CD4-positive, alpha-beta T cell (primary cell): ENCODE measurements at regions of chr19 and their contacts with region 1.

Region 1: GRCh38 chr19:56066152-56067023 is 54.7 kb downstream of the ZNF787 start:
- DNase-seq: peak; percentile 37 to 79 (median 54)
- ATAC-seq: peak; percentile 70
- H3K4me3 ChIP-seq: peak overlapping the region; percentile 38
- H3K4me3 Mint-ChIP-seq: no peak overlapping the region
- H3K27ac ChIP-seq: no peak overlapping the region
- H3K27ac Mint-ChIP-seq: no peak overlapping the region
- H3K4me1 ChIP-seq: peaks cover 12% of the 10 kb centered on the region
- H3K4me1 Mint-ChIP-seq: peaks cover 6% of the 10 kb centered on the region
- H3K27me3 ChIP-seq: peaks cover 9 to 10% of the 10 kb centered on the region in 2 experiments
- H3K27me3 Mint-ChIP-seq: peaks cover 48% of the 10 kb centered on the region
- CTCF ChIP-seq: peak; percentile 90

Region 2: GRCh38 chr19:56090931-56091490 is 24.6 kb after region 1 on chr19:
- CTCF ChIA-PET with region 1: no interaction called
- POLR2A ChIA-PET with region 1: no interaction called
- intact Hi-C with region 1: no loop called
- DNase-seq: no peak
- ATAC-seq: no peak
- H3K4me3 ChIP-seq: no peak overlapping the region
- H3K4me3 Mint-ChIP-seq: no peak overlapping the region
- H3K27ac ChIP-seq: no peak overlapping the region
- H3K27ac Mint-ChIP-seq: no peak overlapping the region
- H3K4me1 ChIP-seq: peaks cover 5% of the 10 kb centered on the region
- H3K4me1 Mint-ChIP-seq: peaks cover 6% of the 10 kb centered on the region
- H3K27me3 ChIP-seq: no peaks in the 10 kb centered on the region
- H3K27me3 Mint-ChIP-seq: no peaks in the 10 kb centered on the region
- CTCF ChIP-seq: no peak

Region 3: DNA sequence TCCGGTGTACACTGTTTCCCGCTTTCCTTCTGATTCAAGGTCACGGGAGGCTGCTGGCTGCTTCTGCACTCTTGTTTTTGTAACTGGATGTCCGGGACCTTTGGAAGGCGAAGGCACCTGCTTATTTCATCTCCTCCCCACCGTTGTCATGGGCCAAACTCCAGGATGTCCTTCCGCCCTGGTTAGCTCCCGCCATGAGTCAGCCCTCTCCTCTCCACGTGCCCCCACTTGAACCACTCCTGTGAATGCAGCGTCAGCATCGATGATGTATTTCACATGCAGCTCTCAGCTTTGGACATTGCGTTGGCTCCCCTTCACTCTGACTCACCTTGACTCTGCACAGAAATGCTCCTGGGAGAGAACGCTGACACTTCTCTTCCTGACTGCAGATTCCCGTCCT is 103.9 kb after region 1 on chr19:
- CTCF ChIA-PET with region 1: interaction called, 13 read pairs
- POLR2A ChIA-PET with region 1: no interaction called
- intact Hi-C with region 1: loop called in 1 of 2 experiments (anchors 1 kb)
- DNase-seq: no peak
- ATAC-seq: no peak
- H3K4me3 ChIP-seq: no peak overlapping the region
- H3K4me3 Mint-ChIP-seq: no peak overlapping the region
- H3K27ac ChIP-seq: no peak overlapping the region
- H3K27ac Mint-ChIP-seq: no peak overlapping the region
- H3K4me1 ChIP-seq: peaks cover 3% of the 10 kb centered on the region
- H3K4me1 Mint-ChIP-seq: peaks cover 4% of the 10 kb centered on the region
- H3K27me3 ChIP-seq: peaks cover 0 to 5% of the 10 kb centered on the region in 2 experiments
- H3K27me3 Mint-ChIP-seq: peaks cover 6% of the 10 kb centered on the region
- CTCF ChIP-seq: no peak

Region 4: DNA sequence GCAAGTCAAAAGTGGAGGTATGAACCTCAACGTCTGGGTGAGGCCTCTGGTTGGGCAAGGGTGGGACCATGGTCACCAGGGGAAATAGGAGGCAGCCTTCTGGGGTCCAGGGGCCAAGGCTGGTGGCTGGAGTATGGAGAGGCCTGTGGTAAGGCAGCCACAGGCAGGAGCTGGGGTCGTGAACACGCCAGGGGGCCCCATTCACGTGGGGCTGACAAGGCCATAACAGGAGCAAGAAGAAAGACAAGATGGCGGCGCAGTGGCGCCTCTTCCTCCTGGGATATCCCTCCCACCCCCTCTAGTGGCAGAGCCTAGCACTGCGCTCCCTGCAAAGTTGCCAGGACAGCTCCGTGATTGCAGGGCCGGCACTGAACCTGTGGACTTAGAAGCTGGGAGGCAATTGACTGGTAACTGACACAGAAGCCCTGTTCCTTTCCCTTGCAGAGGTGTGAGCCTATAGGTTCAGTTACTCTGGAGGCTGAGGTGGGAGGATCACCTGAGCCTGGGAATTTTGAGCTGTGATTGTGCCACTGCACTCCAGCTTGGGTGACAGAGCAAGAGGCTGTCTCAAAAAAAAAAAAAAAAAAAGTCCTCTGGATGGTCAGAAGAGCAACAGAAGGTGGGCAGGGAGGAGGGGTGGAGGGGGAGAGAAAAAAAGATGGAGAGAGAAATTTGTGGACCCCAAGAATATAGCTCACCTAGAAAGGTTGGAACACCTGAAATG is 186.5 kb after region 1 on chr19:
- CTCF ChIA-PET with region 1: interaction called, 13 read pairs
- POLR2A ChIA-PET with region 1: no interaction called
- intact Hi-C with region 1: loop called (anchors 2 to 5 kb)
- DNase-seq: peak; percentile 43 to 79 (median 60)
- ATAC-seq: peak; percentile 80
- H3K4me3 ChIP-seq: no peak overlapping the region
- H3K4me3 Mint-ChIP-seq: no peak overlapping the region
- H3K27ac ChIP-seq: no peak overlapping the region
- H3K27ac Mint-ChIP-seq: no peak overlapping the region
- H3K4me1 ChIP-seq: peaks cover 3% of the 10 kb centered on the region
- H3K4me1 Mint-ChIP-seq: no peaks in the 10 kb centered on the region
- H3K27me3 ChIP-seq: no peaks in the 10 kb centered on the region
- H3K27me3 Mint-ChIP-seq: no peaks in the 10 kb centered on the region
- CTCF ChIP-seq: peak; percentile 58

Region 5: GRCh38 chr19:56333505-56333904 is 267.1 kb after region 1 on chr19:
- CTCF ChIA-PET with region 1: interaction called, 9 read pairs
- POLR2A ChIA-PET with region 1: no interaction called
- intact Hi-C with region 1: loop called (anchors 5 kb)
- DNase-seq: peak in 8 of 14 experiments; percentile 12 to 73 (median 30)
- ATAC-seq: no peak
- H3K4me3 ChIP-seq: no peak overlapping the region
- H3K4me3 Mint-ChIP-seq: no peak overlapping the region
- H3K27ac ChIP-seq: no peak overlapping the region
- H3K27ac Mint-ChIP-seq: no peak overlapping the region
- H3K4me1 ChIP-seq: no peaks in the 10 kb centered on the region
- H3K4me1 Mint-ChIP-seq: no peaks in the 10 kb centered on the region
- H3K27me3 ChIP-seq: no peaks in the 10 kb centered on the region
- H3K27me3 Mint-ChIP-seq: peaks cover 13% of the 10 kb centered on the region
- CTCF ChIP-seq: peak; percentile 65

Region 6: DNA sequence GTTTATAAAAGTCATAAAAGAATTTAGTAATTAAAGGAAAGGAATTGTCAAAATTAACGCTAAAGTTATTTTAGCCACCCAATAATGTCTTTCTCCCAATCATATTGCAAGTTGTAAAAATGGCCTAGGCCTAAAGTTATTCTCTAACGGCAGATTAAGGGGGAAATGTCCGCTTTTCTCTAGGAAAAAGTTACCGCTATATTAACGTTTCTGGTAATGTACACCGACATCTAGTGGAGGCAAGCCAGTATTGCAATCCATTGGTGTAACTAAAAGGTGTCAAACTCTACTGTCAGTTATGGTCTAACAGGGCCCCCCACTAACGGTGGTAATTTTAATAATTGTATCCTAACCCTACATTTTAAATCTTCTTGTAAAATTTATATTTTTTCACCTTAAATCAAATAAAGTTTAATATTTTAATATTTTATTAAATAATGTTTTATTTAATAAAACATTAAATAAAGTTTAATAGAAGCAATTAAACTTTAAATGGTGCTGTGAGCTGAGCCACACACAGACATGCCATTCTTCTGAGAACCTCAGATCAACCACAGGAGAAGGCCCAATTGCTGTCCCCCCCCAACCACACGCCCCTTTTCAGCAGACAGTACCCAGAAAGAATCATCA is 284.1 kb after region 1 on chr19:
- CTCF ChIA-PET with region 1: interaction called, 3 read pairs
- POLR2A ChIA-PET with region 1: no interaction called
- intact Hi-C with region 1: loop called (anchors 1 to 2 kb)
- DNase-seq: peak in 12 of 14 experiments; percentile 13 to 71 (median 39)
- ATAC-seq: no peak
- H3K4me3 ChIP-seq: no peak overlapping the region
- H3K4me3 Mint-ChIP-seq: no peak overlapping the region
- H3K27ac ChIP-seq: no peak overlapping the region
- H3K27ac Mint-ChIP-seq: no peak overlapping the region
- H3K4me1 ChIP-seq: no peaks in the 10 kb centered on the region
- H3K4me1 Mint-ChIP-seq: peaks cover 7% of the 10 kb centered on the region
- H3K27me3 ChIP-seq: no peaks in the 10 kb centered on the region
- H3K27me3 Mint-ChIP-seq: no peaks in the 10 kb centered on the region
- CTCF ChIP-seq: peak; percentile 99

Region 7: DNA sequence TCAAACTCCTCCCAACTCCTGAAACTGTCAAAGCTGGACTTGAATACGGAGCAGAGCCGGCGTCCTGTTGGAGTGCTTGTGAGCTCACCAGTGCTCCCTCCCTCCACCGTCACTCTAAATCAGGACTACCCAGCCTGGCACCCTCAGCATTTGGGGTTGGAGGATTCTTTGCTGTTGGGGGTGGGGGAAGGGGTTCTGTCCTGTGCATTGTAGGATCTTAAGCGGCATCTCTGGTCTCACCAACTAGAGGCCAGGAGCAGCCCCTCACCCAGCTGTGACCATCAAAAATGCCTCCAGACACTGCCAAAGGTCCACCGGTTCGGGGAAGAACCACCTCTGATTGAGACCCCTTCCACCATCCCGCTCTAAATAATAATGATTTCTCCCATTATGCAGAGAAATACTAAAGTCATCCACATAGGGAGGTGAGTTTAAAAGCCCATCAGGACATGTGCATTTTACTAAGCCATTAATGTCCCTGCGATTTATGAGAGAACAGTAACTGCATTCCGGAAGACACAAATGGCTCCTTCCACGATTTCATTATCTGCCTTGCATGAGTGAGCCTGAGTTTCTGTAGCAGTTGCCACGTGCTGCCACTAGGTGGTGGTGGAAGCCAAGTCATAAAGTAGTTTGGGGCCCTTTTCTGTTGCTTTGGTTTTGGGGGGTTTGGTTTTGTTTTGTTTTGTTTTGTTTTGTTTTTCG is 1037.3 kb after region 1 on chr19:
- CTCF ChIA-PET with region 1: no interaction called
- POLR2A ChIA-PET with region 1: no interaction called
- intact Hi-C with region 1: loop called in 1 of 2 experiments (anchors 10 kb)
- DNase-seq: peak; percentile 2 to 76 (median 42)
- ATAC-seq: peak; percentile 72
- H3K4me3 ChIP-seq: no peak overlapping the region
- H3K4me3 Mint-ChIP-seq: peak overlapping the region; percentile 8
- H3K27ac ChIP-seq: no peak overlapping the region
- H3K27ac Mint-ChIP-seq: no peak overlapping the region
- H3K4me1 ChIP-seq: peaks cover 10% of the 10 kb centered on the region
- H3K4me1 Mint-ChIP-seq: peaks cover 5% of the 10 kb centered on the region
- H3K27me3 ChIP-seq: peaks cover 8 to 14% of the 10 kb centered on the region in 2 experiments
- H3K27me3 Mint-ChIP-seq: peaks cover 5% of the 10 kb centered on the region
- CTCF ChIP-seq: peak; percentile 62